ENCODE measurements at regions of chr1 and their contacts with region 1.

Region 1: GRCh38 chr1:213960963-213961362 is 26.8 kb upstream of the PROX1 start:
- DNase-seq: no peak

Region 2: DNA sequence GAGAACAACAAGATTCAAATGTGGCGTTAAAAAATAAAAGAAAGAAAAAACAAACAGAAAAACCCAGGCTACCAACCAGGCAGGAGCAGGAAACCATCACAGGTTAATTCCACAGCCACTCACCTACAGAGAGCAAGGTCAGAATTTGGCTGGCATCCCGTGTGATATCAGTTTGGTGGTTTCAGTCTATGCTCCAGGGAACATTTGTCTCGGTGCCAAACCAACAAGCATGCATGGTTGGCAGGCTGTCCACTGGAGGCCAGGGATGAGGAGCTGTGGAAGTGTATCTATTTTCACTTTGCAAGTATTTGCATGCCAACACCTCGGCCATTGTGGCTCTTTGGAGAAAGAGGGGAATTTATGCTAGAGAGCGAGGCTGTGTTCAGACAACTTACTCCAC is 26.3 kb before region 1 on chr1:
- intact Hi-C with region 1: loop called in 1 of 2 experiments (anchors 1 kb)
- DNase-seq: no peak

Measured in posterior vena cava (tissue), 2 donors.